AG04450 (cell line): ENCODE measurements at regions of chr2 and their contacts with region 1.

Region 1: DNA sequence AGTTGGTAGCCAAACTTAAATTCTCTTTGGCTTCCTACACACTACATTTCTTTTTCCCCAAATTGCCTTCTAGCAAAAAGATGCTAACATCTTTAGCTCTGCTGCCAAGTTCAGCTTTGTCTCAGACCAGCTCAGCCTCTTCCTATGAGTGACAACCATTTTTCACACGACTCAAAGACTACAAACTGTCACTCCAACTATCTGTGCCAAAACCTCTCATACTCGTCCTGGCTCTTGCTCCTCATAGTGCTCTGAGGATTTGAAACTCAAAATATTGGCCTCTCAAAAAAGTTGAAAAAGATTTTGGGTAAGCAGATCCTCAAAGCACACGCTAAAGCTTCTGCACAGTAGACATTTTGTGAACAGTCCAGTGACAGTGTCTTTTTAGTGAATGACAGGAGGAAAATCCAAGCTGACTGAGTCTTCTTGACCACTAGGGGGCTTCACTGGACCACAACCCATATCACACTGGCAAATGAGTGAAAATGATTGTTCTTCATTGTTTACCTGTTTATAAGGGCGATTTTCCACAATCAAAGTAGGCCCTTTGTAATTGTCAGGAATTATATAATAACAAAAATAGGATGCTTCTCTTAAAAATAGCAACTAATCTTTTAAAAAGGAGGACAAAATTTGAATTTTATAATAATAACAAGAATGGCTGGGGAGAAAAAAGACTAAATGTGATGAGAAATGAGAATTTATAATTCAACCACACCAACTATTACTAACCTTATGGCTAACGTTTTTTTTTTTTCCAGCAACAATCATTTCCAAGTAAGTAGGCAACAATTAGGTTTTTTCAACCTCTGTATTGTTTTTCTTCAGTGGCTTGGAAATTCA is 85.5 kb upstream of the PGAP1 start:
- DNase-seq: no peak
- H3K4me3 ChIP-seq: no peak overlapping the region
- H3K27ac ChIP-seq: no peak overlapping the region
- H3K27me3 ChIP-seq: no peaks in the 10 kb centered on the region
- CTCF ChIP-seq: peak; percentile 91

Region 2: GRCh38 chr2:197378494-197379307 is 366.7 kb after region 1 on chr2:
- CTCF ChIA-PET with region 1: interaction called, 13 read pairs
- POLR2A ChIA-PET with region 1: no interaction called
- DNase-seq: no peak
- H3K4me3 ChIP-seq: no peak overlapping the region
- H3K27ac ChIP-seq: no peak overlapping the region
- H3K27me3 ChIP-seq: no peaks in the 10 kb centered on the region
- CTCF ChIP-seq: peak; percentile 77